AG04450 (cell line): ENCODE measurements at regions of chr1 and their contacts with region 1.

Region 1: GRCh38 chr1:168342572-168343280 is 62.0 kb downstream of the TBX19 start:
- DNase-seq: peak; percentile 80
- H3K4me3 ChIP-seq: peak overlapping the region; percentile 27; the same call in 1 of the 2 replicates
- H3K27ac ChIP-seq: no peak overlapping the region
- H3K27me3 ChIP-seq: no peaks in the 10 kb centered on the region
- CTCF ChIP-seq: peak; percentile 75

Region 2: GRCh38 chr1:166865931-166866330 is 1476.8 kb before region 1 on chr1:
- CTCF ChIA-PET with region 1: no interaction called
- POLR2A ChIA-PET with region 1: no interaction called
- DNase-seq: no peak
- H3K4me3 ChIP-seq: no peak overlapping the region
- H3K27ac ChIP-seq: no peak overlapping the region
- H3K27me3 ChIP-seq: no peaks in the 10 kb centered on the region
- CTCF ChIP-seq: no peak

Region 3: DNA sequence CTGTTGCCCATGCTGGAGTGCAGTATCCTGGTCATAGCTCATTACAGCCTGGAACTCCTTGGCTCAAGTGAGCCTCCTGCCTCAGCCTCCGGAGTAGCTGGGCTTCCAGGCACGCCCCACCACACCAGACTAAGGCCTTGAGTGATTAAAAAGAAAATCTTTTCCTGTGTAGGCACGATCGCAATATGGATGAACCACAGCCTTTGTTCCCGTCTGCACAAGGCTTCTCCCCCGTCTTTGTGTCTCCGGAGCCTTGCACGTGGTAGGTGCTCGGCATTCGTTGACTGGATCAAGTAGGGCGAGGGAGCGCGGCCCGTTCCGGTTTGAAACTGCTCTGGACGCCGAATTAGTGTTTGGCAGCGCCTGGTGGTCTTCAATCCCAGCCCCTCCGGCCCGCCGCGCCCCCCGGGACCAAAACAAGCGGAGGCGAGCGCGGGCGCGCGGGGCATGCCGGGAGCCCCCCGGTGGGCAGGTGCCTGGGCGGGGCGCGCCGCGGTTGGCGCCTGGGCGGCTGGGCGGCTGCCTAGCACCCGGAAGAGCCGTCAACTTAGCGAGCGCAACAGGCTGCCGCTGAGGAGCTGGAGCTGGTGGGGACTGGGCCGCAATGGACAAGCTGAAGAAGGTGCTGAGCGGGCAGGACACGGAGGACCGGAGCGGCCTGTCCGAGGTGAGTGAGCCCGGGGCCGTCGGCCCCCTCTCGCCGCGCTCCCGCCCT is 117.1 kb before region 1 on chr1 and contains the start of gene SFT2D2:
- CTCF ChIA-PET with region 1: interaction called, 10 read pairs
- POLR2A ChIA-PET with region 1: no interaction called
- DNase-seq: no peak
- H3K4me3 ChIP-seq: peak within 1 kb of the TSS; percentile 81
- H3K27ac ChIP-seq: peak within 1 kb of the TSS; percentile 33
- H3K27me3 ChIP-seq: peaks cover 3% of the 10 kb centered on the region
- CTCF ChIP-seq: no peak
- polyA plus RNA-seq, gene SFT2D2: 24.6 and 28.4 TPM in 2 replicates

Region 4: GRCh38 chr1:168304865-168305264 is 37.9 kb before region 1 on chr1:
- CTCF ChIA-PET with region 1: interaction called, 15 read pairs
- POLR2A ChIA-PET with region 1: no interaction called
- DNase-seq: no peak
- H3K4me3 ChIP-seq: no peak overlapping the region
- H3K27ac ChIP-seq: no peak overlapping the region
- H3K27me3 ChIP-seq: no peaks in the 10 kb centered on the region
- CTCF ChIP-seq: no peak

Region 5: DNA sequence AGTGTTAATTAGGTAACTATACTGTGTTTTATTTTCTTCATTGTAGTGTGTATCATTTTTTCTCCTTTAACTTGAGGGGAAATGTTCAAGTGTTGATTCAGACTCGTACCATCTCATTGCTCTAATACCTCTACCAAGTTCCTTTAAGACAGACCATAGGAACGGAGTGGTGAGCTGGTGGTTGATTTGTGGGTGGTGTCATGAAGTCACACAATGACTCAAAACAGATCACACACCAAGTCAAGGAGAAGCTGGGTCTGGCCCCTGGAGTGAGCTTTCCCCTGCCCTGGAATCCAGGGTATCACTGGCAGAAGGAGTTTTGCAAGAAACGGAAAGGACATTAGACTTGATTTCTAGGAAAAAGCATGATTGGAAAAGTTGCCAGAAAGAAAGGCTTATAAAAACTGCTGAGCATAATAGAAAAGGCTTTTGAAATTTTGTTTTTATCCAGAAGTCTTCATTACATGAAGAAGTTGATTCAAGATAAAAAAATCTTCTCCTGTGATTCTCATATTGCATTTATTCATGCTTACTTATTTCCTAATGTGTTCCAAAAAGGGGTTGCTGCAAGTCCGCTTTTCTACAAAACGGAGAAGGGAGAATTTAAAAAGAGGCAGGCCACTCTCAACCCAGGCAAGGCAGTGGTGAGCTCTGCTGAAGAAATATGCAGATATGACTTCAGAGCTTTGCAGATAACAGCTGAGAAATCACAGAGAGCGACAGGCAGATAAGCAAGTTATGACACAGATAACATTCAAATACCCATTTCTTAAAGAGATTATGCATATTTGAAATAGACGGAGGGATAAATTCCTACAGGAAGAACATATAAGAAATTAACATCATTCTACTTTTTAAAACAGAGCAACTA is 17.7 kb after region 1 on chr1:
- CTCF ChIA-PET with region 1: interaction called, 63 read pairs
- POLR2A ChIA-PET with region 1: no interaction called
- DNase-seq: no peak
- H3K4me3 ChIP-seq: no peak overlapping the region
- H3K27ac ChIP-seq: no peak overlapping the region
- H3K27me3 ChIP-seq: no peaks in the 10 kb centered on the region
- CTCF ChIP-seq: no peak

Region 6: GRCh38 chr1:168421399-168422004 is 78.8 kb after region 1 on chr1:
- CTCF ChIA-PET with region 1: interaction called, 17 read pairs
- POLR2A ChIA-PET with region 1: no interaction called
- DNase-seq: no peak
- H3K4me3 ChIP-seq: no peak overlapping the region
- H3K27ac ChIP-seq: no peak overlapping the region
- H3K27me3 ChIP-seq: no peaks in the 10 kb centered on the region
- CTCF ChIP-seq: no peak

Region 7: DNA sequence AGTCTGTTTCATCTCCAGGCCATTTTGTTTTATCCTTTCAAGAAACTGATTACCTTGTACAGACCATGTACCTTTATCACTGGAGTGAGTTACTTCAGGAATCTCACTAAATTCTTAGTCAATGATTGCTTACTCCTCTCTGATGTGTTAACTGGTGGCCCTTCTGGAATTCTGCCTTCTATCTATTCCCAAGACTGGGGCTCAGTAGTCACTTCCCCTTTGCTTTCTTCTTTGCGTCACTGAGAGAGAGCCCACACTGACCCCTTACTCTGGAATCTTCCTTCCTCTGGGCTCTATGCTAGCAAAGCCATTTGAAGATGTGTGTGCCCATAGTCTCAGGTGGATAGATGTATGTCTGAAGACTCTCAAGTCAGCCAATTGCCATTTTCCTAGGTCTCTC is 166.5 kb after region 1 on chr1:
- CTCF ChIA-PET with region 1: no interaction called
- POLR2A ChIA-PET with region 1: no interaction called
- DNase-seq: no peak
- H3K4me3 ChIP-seq: no peak overlapping the region
- H3K27ac ChIP-seq: no peak overlapping the region
- H3K27me3 ChIP-seq: no peaks in the 10 kb centered on the region
- CTCF ChIP-seq: no peak

Region 8: GRCh38 chr1:168568346-168568745 is 225.6 kb after region 1 on chr1:
- CTCF ChIA-PET with region 1: interaction called, 10 read pairs
- POLR2A ChIA-PET with region 1: no interaction called
- DNase-seq: no peak
- H3K4me3 ChIP-seq: no peak overlapping the region
- H3K27ac ChIP-seq: no peak overlapping the region
- H3K27me3 ChIP-seq: no peaks in the 10 kb centered on the region
- CTCF ChIP-seq: no peak